ENCODE measurements at regions of chr13 and their contacts with region 1.

Region 1: GRCh38 chr13:67619995-67620380 is 389.9 kb upstream of the PCDH9 start:
- DNase-seq: no peak
- ATAC-seq: peak in 3 of 4 donors; percentile 61 to 74 (median 62)
- H3K4me3 ChIP-seq: no peak overlapping the region
- H3K27ac ChIP-seq: no peak overlapping the region
- H3K4me1 ChIP-seq: no peaks in the 10 kb centered on the region
- H3K27me3 ChIP-seq: no peaks in the 10 kb centered on the region
- CTCF ChIP-seq: no peak
- POLR2A ChIP-seq: no peak

Region 2: DNA sequence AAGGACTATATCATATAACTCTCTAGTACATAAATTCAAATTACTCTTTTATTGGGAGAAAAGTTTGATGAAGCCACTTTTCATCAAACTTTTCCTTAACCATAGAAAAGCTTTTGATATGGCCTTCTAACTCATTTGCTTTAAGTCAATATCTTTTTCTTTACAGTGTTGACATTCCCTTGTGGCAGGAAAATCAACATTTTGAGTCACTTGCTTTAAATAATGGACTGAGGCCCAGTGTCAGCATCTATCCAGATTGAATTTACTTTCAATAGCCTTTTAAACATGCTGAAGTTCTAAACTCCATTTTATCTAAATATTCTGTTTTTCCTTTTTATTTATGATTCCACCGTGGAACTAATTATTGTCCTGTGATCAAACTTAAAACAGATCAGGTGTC is 452.6 kb before region 1 on chr13:
- intact Hi-C with region 1: no loop called
- DNase-seq: no peak
- ATAC-seq: no peak
- H3K4me3 ChIP-seq: no peak overlapping the region
- H3K27ac ChIP-seq: no peak overlapping the region
- H3K4me1 ChIP-seq: peaks cover 0 to 2% (median 0%) of the 10 kb centered on the region in 12 donors
- H3K27me3 ChIP-seq: no peaks in the 10 kb centered on the region
- CTCF ChIP-seq: no peak
- POLR2A ChIP-seq: no peak

Region 3: DNA sequence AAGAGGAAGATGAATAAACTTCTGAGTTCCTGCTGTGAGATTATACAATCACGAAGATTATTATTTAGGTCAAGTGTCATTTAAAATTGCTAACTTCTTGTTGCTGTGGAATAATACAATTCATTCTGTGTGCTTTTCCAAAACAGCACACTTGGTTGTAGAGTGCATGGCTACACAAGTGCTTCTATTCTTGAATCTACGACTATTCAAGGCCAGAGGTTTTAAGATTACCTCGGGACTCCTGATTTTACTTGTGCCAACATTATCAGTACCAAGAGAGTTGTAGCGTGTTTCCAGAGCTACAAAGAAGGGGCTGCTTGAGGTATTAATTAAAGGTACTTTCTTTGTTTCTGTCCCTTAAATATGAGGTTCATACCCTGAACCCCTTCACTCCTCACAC is 155.8 kb before region 1 on chr13:
- intact Hi-C with region 1: loop called in 1 of 10 experiments (anchors 10 kb)
- DNase-seq: no peak
- ATAC-seq: peak in 3 of 4 donors; percentile 65 to 70 (median 67)
- H3K4me3 ChIP-seq: no peak overlapping the region
- H3K27ac ChIP-seq: peak overlapping the region in 2 of 12 donors; percentile 43 to 55
- H3K4me1 ChIP-seq: no peaks in the 10 kb centered on the region
- H3K27me3 ChIP-seq: no peaks in the 10 kb centered on the region
- CTCF ChIP-seq: no peak
- POLR2A ChIP-seq: no peak

Region 4: DNA sequence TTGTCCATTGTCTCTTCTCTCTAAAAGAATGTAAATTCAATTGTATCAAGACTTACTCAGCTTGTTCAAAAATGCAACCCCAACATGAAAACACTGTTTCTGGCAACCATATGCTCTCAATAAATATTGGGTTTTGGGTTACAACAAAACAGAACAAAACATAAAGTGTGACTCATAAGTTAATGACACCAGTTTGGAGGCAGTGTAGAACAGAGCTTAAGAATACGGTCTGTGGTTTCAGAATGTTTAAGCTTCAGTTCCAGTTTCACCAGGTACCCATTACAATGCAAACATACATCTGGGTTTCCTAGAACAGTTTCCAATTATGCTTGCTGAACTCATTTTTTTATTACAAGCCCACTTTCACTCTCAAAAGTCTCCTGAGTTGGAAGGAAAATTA is 104.1 kb before region 1 on chr13:
- intact Hi-C with region 1: no loop called
- DNase-seq: no peak
- ATAC-seq: no peak
- H3K4me3 ChIP-seq: no peak overlapping the region
- H3K27ac ChIP-seq: no peak overlapping the region
- H3K4me1 ChIP-seq: no peaks in the 10 kb centered on the region
- H3K27me3 ChIP-seq: no peaks in the 10 kb centered on the region
- CTCF ChIP-seq: no peak
- POLR2A ChIP-seq: no peak